Activated T-helper 1 cell treated with anti-CD3 and anti-CD28 coated beads, Interleukin-12 subunit alpha, Interleukin-12 subunit beta, Interleukin-2, Interleukin-4 antibody, amounts not matched to agents 30 ng/mL and 10 ng/mL and 1 ng/mL, durations not matched to agents 14 hours and 24 hours and 36 hours (primary cell): ENCODE measurements at regions of chr13 and their contacts with region 1.

Region 1: GRCh38 chr13:32905063-32905863 is 111.0 kb upstream of the KL start:
- DNase-seq: no peak
- H3K4me3 Mint-ChIP-seq: peak overlapping the region; percentile 69
- H3K27ac Mint-ChIP-seq: peak overlapping the region; percentile 83
- H3K4me1 Mint-ChIP-seq: peaks cover 32% of the 10 kb centered on the region
- H3K27me3 Mint-ChIP-seq: peaks cover 4% of the 10 kb centered on the region

Region 2: GRCh38 chr13:32427852-32428580 is 477.2 kb before region 1 on chr13 and contains the start of gene N4BP2L1:
- intact Hi-C with region 1: loop called (anchors 5 kb)
- DNase-seq: peak; percentile 74
- H3K4me3 Mint-ChIP-seq: peak within 1 kb of the TSS; percentile 97
- H3K27ac Mint-ChIP-seq: peak within 1 kb of the TSS; percentile 98
- H3K4me1 Mint-ChIP-seq: peaks cover 53% of the 10 kb centered on the region
- H3K27me3 Mint-ChIP-seq: no peaks in the 10 kb centered on the region
- total RNA-seq, gene N4BP2L1: 17.7 and 20.0 TPM in 2 replicates

Region 3: GRCh38 chr13:32737111-32737571 is 168.1 kb before region 1 on chr13:
- intact Hi-C with region 1: loop called (anchors 2 kb)
- DNase-seq: no peak
- H3K4me3 Mint-ChIP-seq: peak overlapping the region; percentile 74
- H3K27ac Mint-ChIP-seq: peak overlapping the region; percentile 80
- H3K4me1 Mint-ChIP-seq: peaks cover 38% of the 10 kb centered on the region
- H3K27me3 Mint-ChIP-seq: no peaks in the 10 kb centered on the region

Region 4: DNA sequence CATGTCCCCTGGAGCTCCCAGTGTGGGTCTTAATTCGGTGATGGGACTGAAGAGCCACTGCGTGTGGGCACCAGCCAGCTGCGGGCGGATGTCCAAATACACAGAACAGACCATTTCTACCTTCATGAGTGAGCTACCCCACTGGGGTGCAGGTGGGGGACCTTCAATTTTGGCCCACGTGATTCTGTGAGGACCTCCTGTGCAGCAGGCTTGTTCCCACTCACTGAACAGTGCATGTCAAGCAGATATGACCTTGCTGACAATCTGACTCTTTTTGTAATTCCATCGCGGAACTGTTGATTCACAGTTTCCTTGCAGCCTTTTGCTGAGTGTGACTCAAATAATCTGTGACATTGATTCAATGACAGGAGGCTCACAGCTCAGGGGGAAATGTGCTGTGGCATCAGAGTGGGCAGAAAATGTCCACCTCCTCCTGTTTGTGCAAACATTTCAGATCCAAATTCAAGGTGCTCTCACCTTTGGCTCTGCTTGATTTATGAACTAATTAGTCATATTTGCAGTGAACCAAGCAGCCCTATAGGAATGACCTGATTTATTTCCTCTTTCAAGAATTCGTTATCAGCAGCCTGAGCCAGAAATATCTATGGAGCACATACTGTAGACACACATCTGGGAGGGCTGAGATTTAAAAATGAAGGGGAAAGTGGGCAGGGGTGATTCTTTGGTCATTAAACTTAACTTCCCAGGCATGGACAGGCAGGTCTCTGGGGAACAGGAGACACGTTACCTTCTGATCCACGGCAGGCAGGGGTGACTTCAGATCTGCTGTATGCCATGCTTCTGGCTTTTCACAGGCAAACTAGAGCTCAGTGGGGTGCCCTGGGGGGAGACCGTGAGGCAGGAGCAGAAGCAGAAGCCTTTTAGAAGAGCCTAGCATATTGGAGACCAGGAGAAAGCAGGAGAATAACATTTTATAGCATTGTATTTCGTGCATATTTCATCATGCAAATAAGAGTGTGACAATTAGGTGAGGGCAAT is 59.0 kb before region 1 on chr13:
- intact Hi-C with region 1: no loop called
- DNase-seq: no peak
- H3K4me3 Mint-ChIP-seq: no peak overlapping the region
- H3K27ac Mint-ChIP-seq: no peak overlapping the region
- H3K4me1 Mint-ChIP-seq: peaks cover 7% of the 10 kb centered on the region
- H3K27me3 Mint-ChIP-seq: peaks cover 6% of the 10 kb centered on the region

Region 5: DNA sequence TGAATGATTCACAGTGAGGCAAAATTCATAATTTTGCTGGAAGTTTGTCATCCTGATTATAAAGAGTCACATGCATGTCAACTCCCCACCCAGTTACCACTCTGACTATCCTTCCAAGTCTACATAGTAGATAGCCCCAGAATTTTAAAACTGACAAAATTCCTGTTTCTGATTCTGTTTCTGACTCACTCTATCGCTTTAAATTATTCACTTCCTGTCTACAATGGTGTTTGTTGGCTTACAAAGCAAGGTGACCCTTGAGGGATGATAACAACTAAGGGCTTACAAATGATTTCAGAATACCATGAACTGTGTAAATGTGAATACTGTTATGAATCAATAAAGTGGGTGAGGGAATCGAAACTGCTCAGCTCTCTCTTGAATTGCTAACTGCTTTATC is 12.2 kb after region 1 on chr13:
- intact Hi-C with region 1: loop called (anchors 1 kb)
- DNase-seq: no peak
- H3K4me3 Mint-ChIP-seq: no peak overlapping the region
- H3K27ac Mint-ChIP-seq: peak overlapping the region; percentile 5
- H3K4me1 Mint-ChIP-seq: peaks cover 18% of the 10 kb centered on the region
- H3K27me3 Mint-ChIP-seq: no peaks in the 10 kb centered on the region

Region 6: DNA sequence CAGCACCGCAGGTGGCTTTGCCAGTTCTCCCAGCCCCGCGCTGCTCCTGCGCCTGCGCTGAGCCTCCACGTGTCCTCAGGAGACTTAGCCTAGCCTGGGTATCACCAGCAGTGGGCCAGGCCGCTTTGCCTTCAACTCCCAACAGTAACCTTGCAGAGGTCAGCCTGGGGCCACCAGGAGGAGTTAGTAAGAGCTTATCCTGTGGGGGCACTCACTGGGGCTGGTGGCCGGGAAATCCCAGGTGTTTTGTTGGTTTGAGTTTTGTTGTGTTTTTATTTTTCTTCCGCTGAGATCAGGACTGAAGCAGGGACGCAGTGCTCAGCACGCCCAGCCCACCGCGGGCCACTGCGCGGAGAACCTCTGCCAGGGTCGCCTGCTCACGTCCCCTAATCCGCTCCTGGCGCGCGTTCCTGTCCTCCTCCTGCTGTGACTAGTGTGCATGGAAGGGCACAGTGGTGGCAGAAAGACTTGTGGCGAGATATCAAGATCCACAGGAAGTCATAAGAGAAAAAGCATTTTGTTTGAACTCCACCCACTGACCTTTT is 705.3 kb after region 1 on chr13:
- intact Hi-C with region 1: loop called (anchors 5 kb)
- DNase-seq: peak; percentile 8
- H3K4me3 Mint-ChIP-seq: peak overlapping the region; percentile 82
- H3K27ac Mint-ChIP-seq: peak overlapping the region; percentile 95
- H3K4me1 Mint-ChIP-seq: peaks cover 46% of the 10 kb centered on the region
- H3K27me3 Mint-ChIP-seq: no peaks in the 10 kb centered on the region

Region 7: DNA sequence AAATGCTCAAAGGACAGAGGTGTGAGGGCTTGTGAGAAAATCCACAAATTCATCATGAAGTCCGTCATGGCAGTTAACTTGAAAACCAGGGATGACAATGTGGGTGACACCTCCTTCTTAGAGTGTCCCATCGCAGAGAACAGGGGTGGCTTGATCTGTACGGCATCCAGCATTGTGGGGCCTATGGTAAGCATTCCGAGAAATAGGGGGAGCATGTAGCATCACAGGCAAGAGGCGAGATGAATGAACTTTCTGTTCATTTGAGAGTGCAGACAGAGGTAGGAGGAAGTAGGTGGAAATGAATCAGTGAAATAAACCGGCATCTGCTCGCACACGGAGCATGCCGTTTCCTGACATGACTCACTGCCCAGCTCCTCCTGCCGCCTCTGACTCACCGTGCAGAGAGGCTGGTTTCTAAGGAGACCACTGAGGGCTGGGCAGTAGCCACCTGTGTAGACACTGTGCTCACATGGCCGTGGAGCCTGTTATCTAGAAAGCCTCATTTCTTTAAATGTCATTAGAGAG is 1251.6 kb after region 1 on chr13:
- intact Hi-C with region 1: loop called (anchors 5 kb)
- DNase-seq: peak; percentile 59
- H3K4me3 Mint-ChIP-seq: peak overlapping the region; percentile 68
- H3K27ac Mint-ChIP-seq: peak overlapping the region; percentile 91
- H3K4me1 Mint-ChIP-seq: peaks cover 37% of the 10 kb centered on the region
- H3K27me3 Mint-ChIP-seq: peaks cover 3% of the 10 kb centered on the region